Cardiac septum (tissue), 1 donor: ENCODE measurements at regions of chr9 and their contacts with region 1.

Region 1: GRCh38 chr9:109320742-109321448 is at the start of gene EPB41L4B:
- DNase-seq: peak; percentile 90
- total RNA-seq, gene EPB41L4B: 1.5 TPM

Region 2: DNA sequence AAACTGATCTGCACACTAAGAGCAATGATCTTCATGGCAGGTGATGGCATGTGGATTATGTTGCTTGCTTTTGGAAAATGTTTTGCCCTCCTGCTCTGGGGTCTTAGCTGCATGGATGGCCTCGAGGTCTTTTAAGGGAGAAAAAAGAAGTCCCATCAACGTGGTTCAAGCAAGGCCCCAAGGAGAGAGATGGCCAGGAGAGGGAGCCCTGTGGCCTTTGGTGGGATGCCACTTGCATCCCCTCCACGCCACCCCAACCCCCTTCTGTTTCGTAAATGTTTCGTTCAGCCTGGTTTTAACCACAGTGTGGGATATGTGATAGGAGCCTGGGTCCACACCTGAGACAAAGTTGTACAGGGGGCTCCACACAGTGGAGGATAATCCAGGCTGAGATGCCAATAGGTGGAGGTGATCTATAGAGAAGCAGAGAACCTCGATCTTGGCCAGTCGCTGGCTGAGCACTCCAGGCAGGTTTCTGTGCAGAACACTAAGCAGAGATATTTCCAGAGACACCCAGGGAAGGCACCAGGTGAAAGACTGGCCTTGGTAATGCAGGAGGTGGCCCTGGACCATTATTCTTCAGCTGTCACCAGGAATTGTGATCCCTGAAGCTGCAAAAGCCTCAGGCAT is 128.0 kb before region 1 on chr9:
- intact Hi-C with region 1: loop called (anchors 5 kb)
- DNase-seq: no peak

Region 3: DNA sequence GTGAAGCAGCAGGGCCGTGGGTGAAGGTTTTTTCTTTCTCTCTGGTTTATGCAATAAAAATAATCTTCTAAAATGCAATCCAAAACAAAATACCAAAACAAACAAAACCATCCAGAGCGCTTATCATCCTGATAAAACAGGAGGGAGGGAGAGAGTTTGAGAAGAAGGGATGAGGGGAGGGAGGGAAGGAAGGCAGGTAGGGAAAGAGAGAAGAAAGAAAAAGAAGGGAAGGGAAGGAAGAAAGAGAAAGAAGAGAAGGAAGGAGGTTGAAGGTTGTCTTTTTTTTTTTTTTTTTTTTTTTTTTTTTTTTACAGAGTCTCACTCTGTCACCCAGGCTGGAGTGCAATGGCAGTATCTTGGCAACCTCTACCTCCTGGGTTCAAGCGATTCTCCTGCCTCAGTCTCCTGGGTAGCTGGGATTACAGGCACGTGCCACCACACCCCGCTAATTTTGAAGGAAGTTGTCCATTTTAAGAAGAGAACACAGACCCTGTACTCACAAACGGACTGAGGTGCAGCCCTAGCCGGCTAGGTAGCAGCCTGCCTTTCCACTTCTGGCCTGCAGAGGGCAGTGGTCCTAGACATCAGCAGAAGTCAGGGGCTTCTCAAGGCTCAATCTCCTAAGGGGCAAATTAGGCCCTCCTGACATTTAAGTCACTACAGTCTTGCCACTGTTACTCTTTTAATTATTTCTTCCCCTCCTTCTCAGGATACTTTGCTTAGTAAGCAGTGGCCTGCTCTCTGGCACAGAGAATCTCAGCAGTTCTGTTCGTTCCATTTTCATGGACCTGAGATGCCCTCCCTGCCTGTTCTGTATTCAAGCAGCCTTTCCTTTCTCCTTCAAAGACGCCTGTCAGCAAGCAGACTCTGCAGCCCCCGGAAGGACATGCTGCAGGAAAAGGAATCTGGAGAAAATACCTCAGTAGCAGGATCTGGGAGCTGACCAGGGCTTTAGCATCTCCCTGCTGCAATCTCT is 76.5 kb before region 1 on chr9:
- intact Hi-C with region 1: loop called (anchors 2 kb)
- DNase-seq: no peak

Region 4: DNA sequence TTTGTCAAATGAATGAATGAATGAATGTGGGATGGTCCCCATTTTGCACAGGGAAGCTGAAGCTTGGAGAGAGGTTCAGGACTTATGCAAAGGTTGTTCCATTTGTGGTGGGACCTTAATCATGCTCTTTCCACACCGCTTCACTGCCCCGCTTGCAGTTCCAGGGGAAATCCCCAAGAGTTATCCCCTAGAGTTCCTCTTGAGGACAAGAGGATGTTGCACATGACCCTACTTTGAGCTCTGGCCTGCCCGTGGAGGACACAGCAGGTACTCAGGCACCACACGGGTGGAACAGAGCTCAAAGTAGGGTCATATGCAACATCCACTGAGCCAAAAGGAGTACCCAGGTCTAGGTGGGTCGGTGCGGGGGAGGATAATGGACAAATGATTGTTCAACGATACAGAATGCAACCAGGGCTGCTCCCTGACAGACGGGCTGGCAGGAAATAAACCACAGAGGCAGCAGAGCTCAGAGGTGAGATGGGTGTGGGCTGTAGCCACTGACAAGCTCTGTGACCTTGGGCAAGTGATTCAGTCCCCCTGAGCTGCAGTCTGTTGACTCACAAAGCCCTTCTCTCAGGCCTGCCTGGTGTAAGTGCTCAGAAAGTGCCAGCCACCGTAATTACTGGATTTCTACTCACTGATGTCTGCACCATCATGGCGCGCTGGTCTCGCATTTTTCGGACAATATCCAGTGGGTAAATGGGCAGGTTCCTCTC is 60.3 kb after region 1 on chr9:
- intact Hi-C with region 1: no loop called
- DNase-seq: no peak